ENCODE measurements at regions of chr9 and their contacts with region 1.

Region 1: DNA sequence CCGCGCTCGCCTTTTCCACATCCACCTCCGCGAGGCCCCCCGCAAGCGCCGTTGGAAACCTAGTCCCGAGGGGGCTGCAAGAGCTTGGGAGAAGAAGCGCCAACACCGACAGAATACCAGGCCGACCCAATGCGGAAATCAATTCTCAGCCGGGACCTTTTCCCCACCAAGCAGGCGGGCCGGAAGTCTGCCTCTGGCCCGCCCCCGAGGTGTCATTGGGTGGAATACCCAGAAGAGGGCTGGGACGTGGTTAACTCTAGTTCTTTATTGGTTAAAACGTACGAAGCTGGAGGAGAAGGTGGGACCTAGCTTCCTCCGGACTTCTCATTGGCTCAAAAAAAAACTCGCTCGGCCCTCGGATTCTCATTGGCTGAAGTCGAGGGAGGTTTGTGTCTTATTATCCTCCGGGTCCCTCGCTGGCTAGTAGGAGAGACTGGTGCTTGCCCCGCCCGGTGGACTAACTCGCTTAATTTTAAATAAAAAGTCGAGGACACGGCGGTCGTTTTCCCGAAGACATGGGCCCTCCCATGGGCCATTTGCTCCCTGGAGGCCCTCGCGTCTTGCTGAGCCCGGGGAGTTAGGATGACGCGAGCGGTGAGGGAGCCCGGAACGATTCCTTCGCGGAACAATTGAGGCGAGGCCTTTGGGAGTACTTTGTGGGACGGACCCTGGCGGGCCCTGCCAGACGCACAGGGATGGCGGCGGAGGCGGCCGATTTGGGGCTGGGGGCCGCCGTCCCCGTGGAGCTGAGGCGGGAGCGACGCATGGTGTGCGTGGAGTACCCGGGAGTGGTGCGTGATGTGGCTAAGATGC is at the start of gene GTF3C5:
- DNase-seq: peak; percentile 88
- ATAC-seq: peak; percentile 98
- H3K4me3 Mint-ChIP-seq: peak within 1 kb of the TSS; percentile 98
- H3K27ac Mint-ChIP-seq: peak within 1 kb of the TSS; percentile 91
- H3K4me1 Mint-ChIP-seq: peaks cover 35% of the 10 kb centered on the region
- H3K27me3 Mint-ChIP-seq: no peaks in the 10 kb centered on the region
- total RNA-seq, gene GTF3C5: 86.4 to 97.5 TPM

Region 2: GRCh38 chr9:133060417-133060841 is 29.9 kb after region 1 on chr9:
- POLR2A ChIA-PET with region 1: interaction called, 41 read pairs
- DNase-seq: no peak
- ATAC-seq: peak; percentile 31
- H3K4me3 Mint-ChIP-seq: peak overlapping the region; percentile 62
- H3K27ac Mint-ChIP-seq: peak overlapping the region; percentile 92
- H3K4me1 Mint-ChIP-seq: peaks cover 41% of the 10 kb centered on the region
- H3K27me3 Mint-ChIP-seq: no peaks in the 10 kb centered on the region

Region 3: DNA sequence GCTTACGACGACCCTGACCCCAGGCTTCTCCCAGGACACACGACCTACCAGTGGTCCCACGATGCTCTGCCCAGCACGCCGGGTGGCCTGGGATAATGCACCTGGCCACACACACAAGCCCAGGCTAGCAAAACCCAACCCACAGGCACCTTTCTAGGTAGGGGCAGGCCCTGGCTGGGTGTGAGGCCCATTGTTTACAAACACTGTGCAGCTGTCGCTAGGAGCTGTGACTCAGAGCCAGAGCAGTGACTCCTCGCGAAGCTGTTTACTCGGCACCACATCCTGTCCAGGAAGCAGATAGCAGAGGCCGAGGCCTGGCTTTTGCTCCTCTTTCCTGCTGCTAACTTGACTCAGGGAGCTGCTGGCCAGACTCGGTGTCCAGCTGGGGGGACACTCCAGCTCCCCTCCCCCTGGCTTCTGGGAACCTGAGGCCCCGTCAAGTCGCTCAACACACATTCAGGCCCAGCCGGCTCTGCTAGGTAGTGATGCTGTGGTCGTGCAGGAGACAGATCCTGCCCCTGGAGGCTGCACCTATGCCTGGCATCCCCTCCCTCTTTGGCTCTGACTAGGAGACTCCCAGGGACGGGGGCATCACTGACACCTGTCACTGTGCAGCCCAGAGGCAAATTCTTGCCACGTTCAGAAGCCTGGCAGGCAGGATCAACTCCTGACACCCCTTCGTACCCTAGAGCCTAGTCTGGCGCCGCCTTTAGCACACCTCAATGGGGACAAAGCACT is 103.3 kb after region 1 on chr9:
- POLR2A ChIA-PET with region 1: interaction called, 13 read pairs
- DNase-seq: peak; percentile 79
- ATAC-seq: peak; percentile 88
- H3K4me3 Mint-ChIP-seq: peak overlapping the region; percentile 70
- H3K27ac Mint-ChIP-seq: peak overlapping the region; percentile 99
- H3K4me1 Mint-ChIP-seq: peaks cover 53% of the 10 kb centered on the region
- H3K27me3 Mint-ChIP-seq: no peaks in the 10 kb centered on the region

Region 4: GRCh38 chr9:133144137-133144903 is 113.8 kb after region 1 on chr9:
- POLR2A ChIA-PET with region 1: interaction called, 15 read pairs
- DNase-seq: peak; percentile 94
- ATAC-seq: peak; percentile 81
- H3K4me3 Mint-ChIP-seq: peak overlapping the region; percentile 81
- H3K27ac Mint-ChIP-seq: peak overlapping the region; percentile 89
- H3K4me1 Mint-ChIP-seq: peaks cover 51% of the 10 kb centered on the region
- H3K27me3 Mint-ChIP-seq: no peaks in the 10 kb centered on the region

Region 5: DNA sequence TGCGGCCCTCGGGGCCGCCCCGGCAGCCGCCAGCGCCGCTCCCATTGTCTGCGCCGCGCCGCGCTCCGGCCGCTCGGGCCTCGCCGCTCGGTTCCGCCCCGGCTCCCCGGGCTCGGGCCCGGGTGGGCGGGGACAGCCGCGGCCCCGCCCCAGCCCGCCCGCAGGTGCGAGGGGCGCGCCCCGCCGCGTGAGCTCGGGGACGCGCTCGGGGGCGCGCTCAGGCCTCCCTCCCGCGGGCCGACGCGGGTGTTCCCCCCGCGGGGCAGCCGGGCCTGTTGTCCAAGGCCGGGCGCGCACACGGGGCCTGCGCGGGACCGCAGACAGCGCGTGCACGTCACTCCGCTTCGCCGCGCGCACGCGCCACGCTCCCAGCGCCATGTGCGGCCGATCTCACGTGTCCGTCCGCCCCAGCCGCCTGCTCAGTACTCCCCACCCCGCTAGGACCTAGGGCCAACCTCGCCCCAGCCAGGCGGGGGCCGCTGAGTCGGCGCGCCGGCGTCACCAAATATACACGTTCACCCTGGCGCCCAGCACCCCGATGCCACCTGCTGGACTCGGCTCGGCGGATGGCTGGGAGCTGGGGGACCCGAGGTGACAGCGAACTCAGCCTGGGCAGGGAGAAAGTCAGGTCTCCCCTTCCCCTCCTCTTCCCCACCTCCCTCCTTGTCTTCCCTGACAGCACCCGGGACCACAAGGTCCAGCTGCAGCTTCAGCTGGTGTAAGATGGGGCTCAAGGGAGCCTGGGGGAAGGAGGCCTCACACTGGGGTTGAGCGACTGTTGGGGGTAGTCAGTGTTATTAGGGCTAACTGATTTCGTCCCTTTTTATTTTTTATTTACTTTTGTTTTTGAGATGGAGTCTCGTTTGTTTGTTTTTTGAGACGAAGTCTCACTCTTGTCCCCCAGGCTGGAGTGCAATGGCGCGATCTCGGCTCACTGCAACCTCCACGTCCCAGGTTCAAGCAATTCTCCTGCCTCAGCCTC is 118.9 kb after region 1 on chr9:
- POLR2A ChIA-PET with region 1: interaction called, 15 read pairs
- DNase-seq: peak; percentile 84
- ATAC-seq: peak; percentile 61
- H3K4me3 Mint-ChIP-seq: peak overlapping the region; percentile 74
- H3K27ac Mint-ChIP-seq: peak overlapping the region; percentile 81
- H3K4me1 Mint-ChIP-seq: peaks cover 28% of the 10 kb centered on the region
- H3K27me3 Mint-ChIP-seq: no peaks in the 10 kb centered on the region

Measured in activated naive CD8-positive, alpha-beta T cell treated with anti-CD3 and anti-CD28 coated beads, Interleukin-2, amount 10 ng/mL, durations not matched to agents 7 days and 5 days (primary cell).